Lower leg skin (tissue), 4 donors: ENCODE measurements at regions of chr2 and their contacts with region 1.

Region 1: DNA sequence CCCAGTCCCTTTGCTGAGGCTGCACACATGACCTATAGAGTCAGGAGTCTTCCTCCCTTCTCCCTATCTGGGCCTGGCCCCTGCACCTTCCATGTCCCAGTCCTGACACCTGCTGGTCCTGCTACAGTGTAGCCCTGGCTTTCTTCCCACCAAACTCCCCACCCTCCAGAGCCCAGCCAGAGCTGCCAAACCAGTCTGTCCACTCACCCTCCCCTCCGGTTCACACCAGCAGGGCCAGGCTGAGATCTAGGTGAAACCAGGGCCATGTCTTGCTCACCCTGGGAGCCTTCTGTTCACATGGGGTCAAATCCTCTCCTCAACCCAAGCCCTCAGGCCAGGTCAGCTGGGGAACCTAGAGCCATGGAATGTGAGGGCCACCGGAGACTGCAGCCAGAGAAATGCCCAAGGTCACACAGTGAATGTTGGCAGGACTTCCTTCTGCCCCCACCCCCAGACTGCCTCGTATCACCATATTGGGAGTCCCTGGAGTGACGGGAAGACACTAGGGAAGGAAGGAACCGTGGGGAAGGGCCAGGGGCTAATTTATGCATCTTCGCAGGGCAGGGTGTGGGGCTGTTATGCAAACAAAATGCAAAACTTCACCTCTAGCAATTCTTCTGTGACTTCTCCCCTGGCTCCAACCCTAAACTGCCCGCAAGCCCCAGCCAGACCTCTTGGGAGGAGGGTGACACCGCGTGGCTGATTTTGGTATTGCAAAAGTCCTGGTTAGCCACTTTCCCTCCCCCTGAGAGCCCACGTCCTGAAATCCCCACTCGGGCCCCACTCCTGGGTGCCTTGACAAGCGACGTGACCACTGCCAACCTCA is 14.6 kb downstream of the TNS1 start:
- DNase-seq: peak; percentile 89 to 98
- H3K4me3 ChIP-seq: no peak overlapping the region
- CTCF ChIP-seq: peak in 2 of 3 donors; percentile 30
- POLR2A ChIP-seq: no peak

Region 2: DNA sequence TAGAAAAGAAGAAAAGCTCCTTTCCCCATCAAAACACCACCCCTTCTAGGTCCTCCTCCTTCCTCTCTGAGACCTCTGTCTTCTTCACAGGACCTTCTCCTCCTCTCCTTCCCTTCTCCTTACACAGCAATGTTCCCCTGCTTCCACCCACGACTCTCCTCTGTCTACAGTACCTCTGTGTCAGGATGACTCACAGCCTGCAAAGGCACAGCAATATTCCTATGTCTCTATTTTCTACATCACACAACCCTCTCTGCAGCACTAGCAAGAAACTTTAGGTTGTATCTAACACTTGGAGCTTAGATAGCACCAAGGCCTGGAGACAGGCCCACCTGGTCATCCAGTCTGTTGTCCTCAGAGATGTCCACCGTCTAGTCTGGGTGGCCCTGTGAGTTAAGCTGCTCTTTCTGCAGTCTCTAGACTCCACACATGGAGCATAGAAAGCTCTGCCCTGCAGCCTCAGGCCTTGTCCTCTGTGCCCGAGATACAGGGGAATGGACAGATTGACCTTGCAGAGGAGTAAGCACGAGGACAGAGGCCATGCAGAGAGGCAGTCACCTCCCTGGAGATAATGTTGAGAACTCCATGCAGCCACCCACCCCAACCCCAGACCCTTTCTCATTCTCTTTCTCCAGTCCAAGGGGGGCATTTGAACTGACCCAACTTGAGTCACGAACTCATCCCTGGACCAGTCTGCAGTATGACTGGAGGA is 197.4 kb before region 1 on chr2:
- intact Hi-C with region 1: loop called (anchors 1 kb)
- DNase-seq: peak in 1 of 2 donors; percentile 81
- H3K4me3 ChIP-seq: no peak overlapping the region
- CTCF ChIP-seq: no peak
- POLR2A ChIP-seq: no peak

Region 3: GRCh38 chr2:217886720-217887309 is 101.4 kb before region 1 on chr2:
- intact Hi-C with region 1: loop called (anchors 5 kb)
- DNase-seq: peak; percentile 57 to 96
- H3K4me3 ChIP-seq: no peak overlapping the region
- CTCF ChIP-seq: peak in 1 of 3 donors; percentile 51
- POLR2A ChIP-seq: no peak